WTC11 (cell line): ENCODE measurements at regions of chr5 and their contacts with region 1.

Region 1: DNA sequence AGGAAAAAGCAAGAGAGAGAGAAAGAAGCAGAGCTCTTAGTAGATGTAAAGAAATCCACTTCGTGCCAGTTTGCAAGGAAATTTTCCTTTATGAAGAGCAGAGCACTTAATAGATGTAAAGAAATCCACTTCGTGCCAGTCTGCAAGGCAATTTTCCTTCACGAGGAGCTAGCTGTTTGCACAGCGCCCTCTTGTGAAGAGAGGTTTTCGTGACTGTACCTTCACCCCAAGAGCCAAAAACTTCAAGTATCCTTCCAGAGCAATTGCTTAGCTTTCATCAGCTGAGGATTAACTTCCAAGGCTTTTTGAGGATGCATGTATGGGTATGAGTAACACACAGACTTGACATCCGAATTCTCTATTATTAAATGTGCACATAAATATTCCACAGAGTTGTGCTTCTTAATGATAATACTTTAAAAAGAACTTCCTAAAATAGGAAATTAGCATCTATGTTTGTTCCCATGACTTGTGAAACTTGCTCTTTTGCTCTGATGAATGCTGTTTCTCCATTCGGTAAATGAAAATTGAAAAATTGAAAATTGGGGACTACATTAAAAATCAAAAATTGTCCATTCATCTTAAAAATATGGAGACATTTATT is 525.6 kb downstream of the PDE4D start:
- DNase-seq: peak; percentile 50
- ATAC-seq: peak; percentile 64
- H3K4me3 Mint-ChIP-seq: no peak overlapping the region
- H3K27ac Mint-ChIP-seq: no peak overlapping the region
- H3K4me1 Mint-ChIP-seq: peaks cover 13% of the 10 kb centered on the region
- H3K27me3 Mint-ChIP-seq: peaks cover 5% of the 10 kb centered on the region; the same call in 1 of the 2 replicates
- CTCF ChIP-seq: peak; percentile 47; the same call in 1 of the 2 replicates

Region 2: GRCh38 chr5:59222687-59223521 is 145.0 kb before region 1 on chr5:
- CTCF ChIA-PET with region 1: interaction called, 16 read pairs
- POLR2A ChIA-PET with region 1: no interaction called
- DNase-seq: no peak
- ATAC-seq: no peak
- H3K4me3 Mint-ChIP-seq: no peak overlapping the region
- H3K27ac Mint-ChIP-seq: no peak overlapping the region
- H3K4me1 Mint-ChIP-seq: peaks cover 2% of the 10 kb centered on the region; the same call in 1 of the 2 replicates
- H3K27me3 Mint-ChIP-seq: no peaks in the 10 kb centered on the region
- CTCF ChIP-seq: no peak

Region 3: GRCh38 chr5:59342181-59342580 is 25.7 kb before region 1 on chr5:
- CTCF ChIA-PET with region 1: no interaction called
- POLR2A ChIA-PET with region 1: no interaction called
- DNase-seq: no peak
- ATAC-seq: no peak
- H3K4me3 Mint-ChIP-seq: no peak overlapping the region
- H3K27ac Mint-ChIP-seq: no peak overlapping the region
- H3K4me1 Mint-ChIP-seq: no peaks in the 10 kb centered on the region
- H3K27me3 Mint-ChIP-seq: no peaks in the 10 kb centered on the region
- CTCF ChIP-seq: no peak

Region 4: DNA sequence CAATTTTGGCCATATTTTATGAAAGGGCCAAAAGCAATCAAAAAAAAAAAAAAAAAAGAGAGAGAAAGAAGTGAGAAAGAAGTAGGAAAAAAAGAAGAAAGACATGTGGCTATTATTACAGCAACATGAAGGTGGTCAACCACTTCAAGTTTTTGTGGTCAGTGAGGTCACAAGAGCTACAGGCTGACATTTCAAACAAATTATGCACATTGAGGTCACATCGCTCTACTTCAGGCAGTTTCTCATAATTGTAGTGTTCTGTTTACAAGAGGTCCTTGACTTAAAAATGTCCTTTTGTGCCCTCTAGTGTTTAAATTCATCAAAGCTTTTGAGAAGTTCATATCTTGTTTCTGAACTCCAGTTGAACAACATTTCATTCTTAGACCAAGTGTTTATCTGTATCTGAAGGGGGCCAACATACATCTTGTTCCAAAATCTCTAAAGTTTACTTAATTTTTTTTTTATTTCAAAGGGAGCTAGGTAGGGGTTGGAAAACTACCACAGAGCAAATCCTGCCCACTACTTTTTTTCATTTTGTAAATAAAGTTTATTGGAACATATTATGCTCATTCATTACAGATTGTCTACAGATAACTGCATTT is 12.6 kb after region 1 on chr5:
- CTCF ChIA-PET with region 1: interaction called, 13 read pairs
- POLR2A ChIA-PET with region 1: no interaction called
- DNase-seq: no peak
- ATAC-seq: no peak
- H3K4me3 Mint-ChIP-seq: no peak overlapping the region
- H3K27ac Mint-ChIP-seq: no peak overlapping the region
- H3K4me1 Mint-ChIP-seq: no peaks in the 10 kb centered on the region
- H3K27me3 Mint-ChIP-seq: no peaks in the 10 kb centered on the region
- CTCF ChIP-seq: no peak

Region 5: GRCh38 chr5:59569608-59570334 is 201.9 kb after region 1 on chr5:
- CTCF ChIA-PET with region 1: no interaction called
- POLR2A ChIA-PET with region 1: no interaction called
- DNase-seq: no peak
- ATAC-seq: peak; percentile 75
- H3K4me3 Mint-ChIP-seq: no peak overlapping the region
- H3K27ac Mint-ChIP-seq: peak overlapping the region; percentile 82
- H3K4me1 Mint-ChIP-seq: peaks cover 47% of the 10 kb centered on the region
- H3K27me3 Mint-ChIP-seq: no peaks in the 10 kb centered on the region
- CTCF ChIP-seq: no peak

Region 6: GRCh38 chr5:59608745-59609144 is 240.9 kb after region 1 on chr5:
- CTCF ChIA-PET with region 1: no interaction called
- POLR2A ChIA-PET with region 1: no interaction called
- DNase-seq: no peak
- ATAC-seq: no peak
- H3K4me3 Mint-ChIP-seq: no peak overlapping the region
- H3K27ac Mint-ChIP-seq: no peak overlapping the region
- H3K4me1 Mint-ChIP-seq: peaks cover 38% of the 10 kb centered on the region
- H3K27me3 Mint-ChIP-seq: no peaks in the 10 kb centered on the region
- CTCF ChIP-seq: no peak